ENCODE measurements at regions of chr18 and their contacts with region 1.

Region 1: GRCh38 chr18:30806823-30807222 is 235.7 kb downstream of the DSC3 start:
- DNase-seq: no peak
- H3K4me3 Mint-ChIP-seq: no peak overlapping the region
- H3K27ac Mint-ChIP-seq: no peak overlapping the region
- H3K4me1 Mint-ChIP-seq: no peaks in the 10 kb centered on the region
- H3K27me3 Mint-ChIP-seq: no peaks in the 10 kb centered on the region

Region 2: DNA sequence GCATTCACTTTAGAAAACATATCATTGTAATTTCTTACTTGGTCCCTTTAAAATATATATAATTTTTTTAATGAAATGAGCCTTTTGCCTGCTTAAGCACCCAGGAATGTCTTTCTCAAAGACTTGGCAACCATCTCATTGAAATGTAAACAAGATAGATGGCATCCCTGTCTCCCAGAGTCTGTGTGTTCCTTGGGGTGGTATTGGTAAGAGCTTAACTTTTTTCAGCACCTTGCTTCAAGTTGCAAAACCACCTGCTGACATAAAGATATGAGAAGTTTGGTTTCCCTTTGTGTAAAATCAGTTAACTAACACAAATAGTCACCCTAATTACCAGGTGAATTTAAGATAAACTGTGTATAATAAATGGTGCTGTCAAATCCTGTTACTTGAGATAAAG is 31.2 kb before region 1 on chr18:
- intact Hi-C with region 1: loop called (anchors 5 kb)
- DNase-seq: no peak
- H3K4me3 Mint-ChIP-seq: no peak overlapping the region
- H3K27ac Mint-ChIP-seq: no peak overlapping the region
- H3K4me1 Mint-ChIP-seq: no peaks in the 10 kb centered on the region
- H3K27me3 Mint-ChIP-seq: no peaks in the 10 kb centered on the region

Region 3: GRCh38 chr18:30870466-30870865 is 63.6 kb after region 1 on chr18:
- intact Hi-C with region 1: no loop called
- DNase-seq: no peak
- H3K4me3 Mint-ChIP-seq: no peak overlapping the region
- H3K27ac Mint-ChIP-seq: no peak overlapping the region
- H3K4me1 Mint-ChIP-seq: no peaks in the 10 kb centered on the region
- H3K27me3 Mint-ChIP-seq: no peaks in the 10 kb centered on the region

Region 4: GRCh38 chr18:31301201-31301655 is 494.4 kb after region 1 on chr18:
- intact Hi-C with region 1: no loop called
- DNase-seq: no peak
- H3K4me3 Mint-ChIP-seq: no peak overlapping the region
- H3K27ac Mint-ChIP-seq: no peak overlapping the region
- H3K4me1 Mint-ChIP-seq: no peaks in the 10 kb centered on the region
- H3K27me3 Mint-ChIP-seq: no peaks in the 10 kb centered on the region

Region 5: GRCh38 chr18:31901063-31901462 is 1094.2 kb after region 1 on chr18:
- intact Hi-C with region 1: no loop called
- DNase-seq: no peak
- H3K4me3 Mint-ChIP-seq: no peak overlapping the region
- H3K27ac Mint-ChIP-seq: no peak overlapping the region
- H3K4me1 Mint-ChIP-seq: no peaks in the 10 kb centered on the region
- H3K27me3 Mint-ChIP-seq: no peaks in the 10 kb centered on the region

Measured in activated T-helper 1 cell treated with anti-CD3 and anti-CD28 coated beads, Interleukin-12 subunit alpha, Interleukin-12 subunit beta, Interleukin-2, Interleukin-4 antibody, amounts not matched to agents 30 ng/mL and 10 ng/mL and 1 ng/mL, durations not matched to agents 14 hours and 24 hours and 36 hours (primary cell).